Endothelial cell of umbilical vein (primary cell): ENCODE measurements at regions of chr2 and their contacts with region 1.

Region 1: GRCh38 chr2:7037340-7038333 is 120.4 kb downstream of the RNF144A start:
- DNase-seq: peak; percentile 52
- H3K4me3 ChIP-seq: no peak overlapping the region
- H3K27ac ChIP-seq: no peak overlapping the region
- H3K4me1 ChIP-seq: no peaks in the 10 kb centered on the region
- H3K27me3 ChIP-seq: no peaks in the 10 kb centered on the region
- CTCF ChIP-seq: peak; percentile 63 to 87
- POLR2A ChIP-seq: no peak

Region 2: GRCh38 chr2:6700335-6700734 is 337.3 kb before region 1 on chr2:
- CTCF ChIA-PET with region 1: no interaction called
- POLR2A ChIA-PET with region 1: no interaction called
- dilution Hi-C with region 1: no loop called
- intact Hi-C with region 1: no loop called
- DNase-seq: no peak
- H3K4me3 ChIP-seq: no peak overlapping the region
- H3K27ac ChIP-seq: no peak overlapping the region
- H3K4me1 ChIP-seq: no peaks in the 10 kb centered on the region
- H3K27me3 ChIP-seq: no peaks in the 10 kb centered on the region
- CTCF ChIP-seq: no peak
- POLR2A ChIP-seq: no peak

Region 3: GRCh38 chr2:6977113-6977741 is 60.4 kb before region 1 on chr2:
- CTCF ChIA-PET with region 1: no interaction called
- POLR2A ChIA-PET with region 1: no interaction called
- dilution Hi-C with region 1: no loop called
- intact Hi-C with region 1: loop called (anchors 2 kb)
- DNase-seq: peak; percentile 47
- H3K4me3 ChIP-seq: no peak overlapping the region
- H3K27ac ChIP-seq: no peak overlapping the region
- H3K4me1 ChIP-seq: peaks cover 19% of the 10 kb centered on the region
- H3K27me3 ChIP-seq: no peaks in the 10 kb centered on the region
- CTCF ChIP-seq: no peak
- POLR2A ChIP-seq: no peak

Region 4: DNA sequence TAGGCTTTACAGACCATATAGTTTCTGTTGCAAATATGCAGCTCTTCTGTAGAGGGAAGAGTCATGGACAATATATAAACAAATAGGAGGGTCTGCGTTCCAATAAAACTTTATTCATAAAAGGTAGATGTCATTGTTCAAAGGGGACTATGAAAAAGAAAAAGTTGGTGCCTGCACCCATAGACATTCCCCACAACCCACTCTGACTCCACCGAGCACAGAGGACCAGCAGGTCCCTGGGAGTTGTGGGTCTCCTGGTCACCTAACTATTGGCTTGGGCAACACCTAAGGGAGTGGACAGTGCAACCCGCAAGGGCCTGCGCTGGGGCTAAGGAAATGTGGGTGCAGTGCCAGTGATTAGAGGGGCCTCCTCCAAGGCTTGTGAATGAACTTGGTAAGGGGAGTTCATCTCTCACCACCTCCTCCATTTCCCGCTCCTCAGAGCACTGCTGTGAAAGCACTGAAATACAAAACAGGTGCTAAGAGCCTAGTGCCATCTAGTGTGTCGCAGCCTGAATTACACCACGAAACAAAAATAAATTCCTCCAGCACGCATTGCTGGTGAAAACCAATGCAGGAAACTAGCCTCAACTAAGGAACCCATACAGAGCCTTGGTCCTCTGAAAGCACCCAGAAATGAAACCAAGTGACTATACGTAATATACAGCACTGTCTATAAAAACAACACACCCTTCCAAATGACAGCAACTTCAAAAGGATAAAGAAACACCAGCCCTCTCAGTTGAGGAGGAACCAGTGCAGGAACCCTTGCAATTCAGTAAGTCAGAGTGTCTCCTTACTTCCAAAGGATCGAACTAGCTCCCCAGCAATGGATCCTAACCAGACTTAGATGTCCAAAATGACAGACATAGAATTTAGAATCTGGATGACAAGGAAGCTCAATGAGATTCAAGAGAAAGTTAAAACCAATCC is 46.2 kb after region 1 on chr2:
- CTCF ChIA-PET with region 1: interaction called, 3 read pairs
- POLR2A ChIA-PET with region 1: no interaction called
- dilution Hi-C with region 1: no loop called
- intact Hi-C with region 1: loop called (anchors 1 kb)
- DNase-seq: peak; percentile 52
- H3K4me3 ChIP-seq: no peak overlapping the region
- H3K27ac ChIP-seq: no peak overlapping the region
- H3K4me1 ChIP-seq: no peaks in the 10 kb centered on the region
- H3K27me3 ChIP-seq: peaks cover 0 to 2% of the 10 kb centered on the region in 2 experiments
- CTCF ChIP-seq: peak; percentile 57 to 71
- POLR2A ChIP-seq: no peak